ENCODE measurements at regions of chr22 and their contacts with region 1.

Region 1: GRCh38 chr22:39220897-39221850 is 23.6 kb downstream of the PDGFB start:
- DNase-seq: no peak
- ATAC-seq: peak in 7 of 8 donors; percentile 39 to 87 (median 69)
- H3K4me3 ChIP-seq: no peak overlapping the region
- H3K27ac ChIP-seq: peak overlapping the region in 4 of 10 donors; percentile 25 to 53 (median 35)
- H3K4me1 ChIP-seq: peaks cover 0 to 14% (median 10%) of the 10 kb centered on the region in 9 donors
- H3K27me3 ChIP-seq: no peaks in the 10 kb centered on the region
- CTCF ChIP-seq: no peak

Region 2: GRCh38 chr22:38872172-38872830 is 348.9 kb before region 1 on chr22 and contains the start of gene CBX6:
- intact Hi-C with region 1: no loop called
- DNase-seq: peak; percentile 97 to 98
- ATAC-seq: peak; percentile 85 to 91 (median 89)
- H3K4me3 ChIP-seq: peak within 1 kb of the TSS; percentile 67 to 96 (median 84)
- H3K27ac ChIP-seq: peak within 1 kb of the TSS; percentile 94 to 99 (median 98)
- H3K4me1 ChIP-seq: peaks cover 17 to 50% (median 42%) of the 10 kb centered on the region in 9 donors
- H3K27me3 ChIP-seq: no peaks in the 10 kb centered on the region
- CTCF ChIP-seq: no peak
- total RNA-seq, gene CBX6: 28.2 to 49.1 (median 37.3) TPM

Region 3: GRCh38 chr22:39185601-39186014 is 35.6 kb before region 1 on chr22:
- intact Hi-C with region 1: loop called in 1 of 10 experiments (anchors 5 kb)
- DNase-seq: peak; percentile 76 to 80
- ATAC-seq: peak; percentile 79 to 95 (median 94)
- H3K4me3 ChIP-seq: no peak overlapping the region
- H3K27ac ChIP-seq: peak overlapping the region; percentile 78 to 92 (median 82)
- H3K4me1 ChIP-seq: peaks cover 11 to 28% (median 27%) of the 10 kb centered on the region in 9 donors
- H3K27me3 ChIP-seq: no peaks in the 10 kb centered on the region
- CTCF ChIP-seq: peak in 8 of 9 donors; percentile 30 to 74 (median 56)

Region 4: DNA sequence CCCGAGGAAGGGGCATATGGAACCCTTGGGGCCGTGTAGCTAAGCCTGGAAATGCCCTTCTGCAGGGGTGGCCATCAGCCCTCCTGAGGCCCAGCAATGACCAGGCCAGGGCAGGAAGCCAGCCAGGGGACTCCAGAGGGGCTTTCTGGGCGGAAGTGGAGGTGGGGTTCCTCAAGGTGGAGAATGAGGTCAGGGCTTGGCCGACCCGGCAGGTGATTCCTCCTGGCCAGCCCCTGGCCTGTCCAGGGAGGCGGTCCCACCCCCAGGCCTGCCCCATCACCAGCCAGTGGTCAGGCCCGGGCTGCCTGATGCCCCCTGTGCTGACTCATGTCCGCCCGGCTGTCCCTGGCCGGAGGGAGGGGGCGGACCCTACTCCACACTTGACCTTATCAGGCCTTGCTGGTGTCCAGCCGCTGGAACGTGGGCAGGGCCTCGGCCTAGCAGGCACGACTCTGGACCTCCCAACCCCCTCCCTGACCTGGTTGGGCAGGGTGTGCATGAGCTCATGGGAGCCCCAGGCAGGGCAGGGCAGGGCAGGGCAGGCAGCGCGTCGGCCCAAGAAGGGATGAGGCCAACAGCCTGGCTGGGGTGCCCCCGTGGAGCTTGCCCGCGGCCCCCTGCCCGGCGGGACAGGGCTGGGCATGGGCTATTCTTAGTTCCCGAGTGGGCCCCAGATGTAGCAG is 62.3 kb after region 1 on chr22:
- intact Hi-C with region 1: no loop called
- DNase-seq: peak; percentile 72 to 74
- ATAC-seq: peak; percentile 30 to 88 (median 76)
- H3K4me3 ChIP-seq: no peak overlapping the region
- H3K27ac ChIP-seq: peak overlapping the region; percentile 61 to 89 (median 80)
- H3K4me1 ChIP-seq: peaks cover 13 to 66% (median 54%) of the 10 kb centered on the region in 9 donors
- H3K27me3 ChIP-seq: no peaks in the 10 kb centered on the region
- CTCF ChIP-seq: no peak

Measured in heart right ventricle (tissue), 16 donors.